HEK293 (cell line): ENCODE measurements at regions of chr15 and their contacts with region 1.

Region 1: DNA sequence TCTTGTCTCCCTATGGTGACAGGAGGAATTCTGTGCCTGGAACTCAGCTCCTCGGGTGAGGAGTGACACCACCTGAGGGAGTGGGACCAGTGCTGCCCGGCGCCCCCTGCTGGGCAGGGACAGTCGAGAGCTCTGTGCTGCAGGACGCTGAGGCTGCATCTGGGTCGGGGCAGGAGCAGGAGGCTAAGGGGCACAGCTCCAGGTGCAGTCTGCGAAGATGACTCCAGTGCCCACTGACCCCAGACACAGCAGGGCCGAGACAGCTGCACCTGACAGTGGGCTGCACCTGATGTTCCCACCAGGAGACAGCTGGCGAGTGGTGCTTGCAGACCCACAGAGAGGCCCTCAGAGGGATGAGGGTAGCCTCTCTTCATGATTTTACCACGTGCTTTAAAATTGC is 152.9 kb downstream of the ATP10A start:
- H3K4me3 ChIP-seq: no peak overlapping the region
- H3K27ac ChIP-seq: no peak overlapping the region
- H3K4me1 ChIP-seq: no peaks in the 10 kb centered on the region
- CTCF ChIP-seq: peak; percentile 51

Region 2: GRCh38 chr15:25508369-25509002 is 201.7 kb before region 1 on chr15:
- CTCF ChIA-PET with region 1: interaction called, 13 read pairs
- POLR2A ChIA-PET with region 1: no interaction called
- H3K4me3 ChIP-seq: no peak overlapping the region
- H3K27ac ChIP-seq: no peak overlapping the region
- H3K4me1 ChIP-seq: no peaks in the 10 kb centered on the region
- CTCF ChIP-seq: no peak

Region 3: DNA sequence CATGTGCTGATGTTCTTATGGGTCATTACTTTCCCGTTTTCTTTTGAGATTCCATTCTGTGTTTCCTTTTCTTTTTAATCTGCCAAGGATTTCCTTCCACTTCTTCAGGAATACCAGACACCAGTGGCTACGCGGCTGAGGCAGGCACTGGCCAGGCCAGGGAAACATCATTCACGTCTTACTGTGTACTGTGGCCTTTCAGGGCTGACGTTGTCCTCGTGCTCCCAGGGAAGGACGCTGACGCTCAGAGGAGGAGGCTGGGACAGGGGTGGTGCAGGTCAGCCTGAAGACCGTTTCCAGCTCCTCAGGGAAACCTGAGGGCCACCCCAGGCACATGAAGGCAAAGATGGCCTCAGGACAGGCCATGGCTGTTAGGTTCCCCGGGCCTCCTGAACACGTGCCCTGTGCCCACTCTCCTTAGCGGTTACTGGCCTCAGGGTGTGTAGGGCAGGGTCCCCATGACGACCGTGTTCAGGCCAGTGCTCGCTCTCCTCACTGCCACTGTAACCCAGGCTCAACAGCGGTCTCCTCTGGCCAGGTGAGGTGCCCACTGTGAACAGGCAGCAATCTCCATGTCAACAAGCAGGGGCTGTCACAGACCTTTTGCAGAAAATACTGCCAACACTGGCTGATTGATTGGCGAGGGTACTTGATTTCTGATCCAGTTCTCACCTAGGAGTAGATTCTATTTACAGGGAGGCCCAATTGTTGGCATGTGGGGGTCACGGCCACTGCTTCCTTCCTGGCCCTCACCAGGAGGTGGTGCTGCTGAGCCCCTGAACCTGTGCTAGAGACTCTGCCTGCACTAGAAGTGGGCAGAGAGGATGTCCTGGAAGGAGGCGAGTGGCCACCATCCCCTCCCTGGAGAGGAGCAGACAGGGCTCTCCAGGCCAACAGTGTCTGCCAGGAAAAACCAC is 16.6 kb before region 1 on chr15:
- CTCF ChIA-PET with region 1: interaction called, 19 read pairs
- POLR2A ChIA-PET with region 1: no interaction called
- H3K4me3 ChIP-seq: no peak overlapping the region
- H3K27ac ChIP-seq: no peak overlapping the region
- H3K4me1 ChIP-seq: no peaks in the 10 kb centered on the region
- CTCF ChIP-seq: no peak